Dendritic cell treated with granulocyte-macrophage colony-stimulating factor and Interleukin-4, amounts not matched to agents 40 ng/mL and 50 ng/mL, for 4 days (primary cell): ENCODE measurements at regions of chr6 and their contacts with region 1.

Region 1: GRCh38 chr6:150004783-150005717 is 20.3 kb downstream of the RAET1L start:
- H3K4me3 Mint-ChIP-seq: peak overlapping the region; percentile 81
- H3K27ac Mint-ChIP-seq: peak overlapping the region; percentile 60
- H3K4me1 Mint-ChIP-seq: peaks cover 11% of the 10 kb centered on the region
- H3K27me3 Mint-ChIP-seq: peaks cover 83% of the 10 kb centered on the region

Region 2: DNA sequence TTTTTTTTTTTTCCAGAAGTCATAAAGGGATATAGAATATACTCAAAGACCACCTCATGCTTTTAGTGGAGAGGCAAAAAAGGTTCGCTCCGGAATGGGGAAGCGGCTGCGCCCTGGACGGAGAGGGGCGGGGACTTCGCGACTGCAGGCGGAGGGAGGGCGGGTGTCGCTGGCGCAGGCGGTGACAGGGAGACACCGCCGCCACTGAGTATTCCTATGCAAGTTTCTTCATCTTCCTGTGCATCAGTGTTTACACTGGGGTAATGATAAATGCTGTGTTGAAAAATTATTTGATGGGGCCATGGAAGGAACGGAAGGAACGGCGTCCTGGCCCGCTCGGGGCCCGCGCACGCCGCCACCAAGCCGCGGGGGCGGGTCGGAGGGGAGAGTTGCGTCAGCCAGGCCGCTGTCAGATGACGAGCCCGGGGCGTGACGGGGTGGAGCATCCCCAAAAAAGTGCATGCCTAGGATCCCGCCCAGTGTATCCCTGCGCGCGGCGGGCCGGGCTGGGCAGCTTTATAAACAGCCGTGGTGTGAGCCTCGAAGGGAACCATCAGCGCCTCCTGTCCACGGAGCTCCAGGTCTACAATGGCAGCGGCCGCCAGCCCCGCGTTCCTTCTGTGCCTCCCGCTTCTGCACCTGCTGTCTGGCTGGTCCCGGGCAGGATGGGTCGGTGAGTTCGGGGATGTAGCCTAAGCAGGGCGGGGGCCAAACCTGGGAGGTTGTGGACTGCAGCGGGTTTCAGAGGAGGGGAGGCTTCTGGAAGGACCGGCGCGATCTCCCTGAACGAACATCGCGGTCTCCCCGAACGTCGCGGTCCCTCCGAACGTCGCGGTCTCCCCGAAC is 41.4 kb before region 1 on chr6 and contains the start of gene ULBP1:
- intact Hi-C with region 1: loop called (anchors 2 kb)
- H3K4me3 Mint-ChIP-seq: peak within 1 kb of the TSS; percentile 76
- H3K27ac Mint-ChIP-seq: peak within 1 kb of the TSS; percentile 82
- H3K4me1 Mint-ChIP-seq: peaks cover 29% of the 10 kb centered on the region
- H3K27me3 Mint-ChIP-seq: peaks cover 86% of the 10 kb centered on the region

Region 3: DNA sequence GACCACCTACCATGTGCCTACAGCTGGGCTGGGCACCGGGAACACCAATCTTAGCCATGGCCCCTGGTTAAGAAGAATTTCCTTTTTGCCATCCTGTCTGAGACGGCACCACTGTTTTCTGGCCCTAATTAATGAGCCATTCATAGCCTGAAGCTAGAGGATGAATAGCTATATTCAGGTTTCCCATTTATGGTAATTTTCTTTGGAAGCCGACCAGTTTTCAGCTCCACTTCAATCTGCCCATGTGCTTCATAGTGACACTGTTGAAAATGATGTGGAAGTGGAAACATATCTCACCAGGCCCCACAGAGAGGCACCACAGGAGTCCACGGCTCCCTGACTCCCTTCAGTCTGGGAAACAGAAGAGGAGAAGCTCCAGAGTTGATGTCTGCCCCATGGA is 86.4 kb after region 1 on chr6:
- intact Hi-C with region 1: no loop called
- H3K4me3 Mint-ChIP-seq: no peak overlapping the region
- H3K27ac Mint-ChIP-seq: no peak overlapping the region
- H3K4me1 Mint-ChIP-seq: no peaks in the 10 kb centered on the region
- H3K27me3 Mint-ChIP-seq: peaks cover 9% of the 10 kb centered on the region